Heart left ventricle (tissue), 16 donors: ENCODE measurements at regions of chr21 and their contacts with region 1.

Region 1: GRCh38 chr21:33641336-33642026 is at the start of gene CRYZL1:
- DNase-seq: peak; percentile 100
- ATAC-seq: peak; percentile 89 to 94 (median 92)
- H3K4me3 ChIP-seq: peak within 1 kb of the TSS; percentile 71 to 93 (median 89)
- H3K27ac ChIP-seq: peak within 1 kb of the TSS; percentile 59 to 97 (median 88)
- H3K4me1 ChIP-seq: peaks cover 0 to 41% (median 20%) of the 10 kb centered on the region in 12 donors
- H3K27me3 ChIP-seq: no peaks in the 10 kb centered on the region
- CTCF ChIP-seq: no peak
- POLR2A ChIP-seq: peak in 1 of 2 donors; percentile 60
- total RNA-seq, gene CRYZL1: 15.2 to 33.8 (median 25.3) TPM

Region 2: DNA sequence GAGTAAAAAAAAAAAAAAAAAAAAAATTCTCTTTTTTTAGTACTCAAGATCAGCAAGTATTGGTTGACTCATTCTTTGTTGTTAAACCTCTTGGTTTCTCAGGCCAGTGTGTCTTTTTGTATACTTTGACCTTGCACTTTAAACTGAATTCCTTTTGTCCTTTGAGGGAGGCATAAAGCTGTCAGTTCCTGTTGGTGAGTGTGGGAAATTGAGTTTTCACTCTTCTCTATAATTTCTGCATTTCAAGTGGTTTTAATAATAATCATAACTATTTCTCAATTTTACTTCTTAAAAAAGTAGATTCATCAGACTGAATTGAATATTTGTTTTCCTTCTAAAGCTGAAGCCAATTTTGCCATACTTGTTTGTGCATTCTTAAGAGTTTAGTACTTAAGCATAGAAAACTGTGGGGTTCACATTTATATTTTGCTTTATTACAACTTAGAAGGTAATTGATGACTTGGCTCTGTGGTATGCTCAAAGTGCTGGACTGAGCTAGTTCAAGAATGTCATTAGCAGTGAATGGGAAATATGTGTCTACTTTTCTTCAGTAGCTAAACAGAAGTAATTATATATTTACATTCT is 44.2 kb after region 1 on chr21:
- intact Hi-C with region 1: loop called in 2 of 10 experiments (anchors 5 to 10 kb)
- DNase-seq: no peak
- ATAC-seq: peak in 1 of 4 donors; percentile 42
- H3K4me3 ChIP-seq: no peak overlapping the region
- H3K27ac ChIP-seq: peak overlapping the region in 5 of 12 donors; percentile 6 to 25 (median 19)
- H3K4me1 ChIP-seq: peaks cover 0 to 66% (median 45%) of the 10 kb centered on the region in 12 donors
- H3K27me3 ChIP-seq: no peaks in the 10 kb centered on the region
- CTCF ChIP-seq: no peak
- POLR2A ChIP-seq: no peak

Region 3: GRCh38 chr21:33698087-33698860 is 56.8 kb after region 1 on chr21:
- intact Hi-C with region 1: loop called in 3 of 10 experiments (anchors 5 to 10 kb)
- DNase-seq: no peak
- ATAC-seq: peak; percentile 49 to 83 (median 64)
- H3K4me3 ChIP-seq: no peak overlapping the region
- H3K27ac ChIP-seq: peak overlapping the region in 4 of 12 donors; percentile 9 to 44 (median 22)
- H3K4me1 ChIP-seq: peaks cover 0 to 46% (median 25%) of the 10 kb centered on the region in 12 donors
- H3K27me3 ChIP-seq: no peaks in the 10 kb centered on the region
- CTCF ChIP-seq: no peak
- POLR2A ChIP-seq: no peak

Region 4: DNA sequence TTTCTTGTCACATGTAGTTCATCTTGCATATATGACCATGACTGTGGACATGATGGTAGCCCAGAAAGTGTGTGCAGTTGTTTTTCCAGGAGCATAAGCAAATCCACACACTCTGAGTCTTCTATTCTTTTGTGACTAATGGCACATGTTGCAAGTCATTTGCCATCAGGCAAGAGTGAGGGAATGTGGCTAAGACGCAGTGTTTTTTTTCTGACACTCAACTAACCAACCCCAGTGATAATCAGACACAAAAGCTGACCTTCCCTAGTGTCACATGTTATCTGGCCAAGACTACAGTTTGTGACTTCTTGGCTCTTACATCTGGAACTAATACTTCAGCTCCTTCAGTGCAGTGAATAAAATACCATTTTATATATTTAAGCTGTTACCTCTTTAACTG is 109.6 kb after region 1 on chr21:
- intact Hi-C with region 1: loop called in 8 of 10 experiments (anchors 5 to 10 kb)
- DNase-seq: no peak
- ATAC-seq: peak in 3 of 4 donors; percentile 31 to 50 (median 44)
- H3K4me3 ChIP-seq: no peak overlapping the region
- H3K27ac ChIP-seq: peak overlapping the region in 7 of 12 donors; percentile 1 to 50 (median 17)
- H3K4me1 ChIP-seq: peaks cover 0 to 39% (median 17%) of the 10 kb centered on the region in 12 donors
- H3K27me3 ChIP-seq: no peaks in the 10 kb centered on the region
- CTCF ChIP-seq: no peak
- POLR2A ChIP-seq: no peak

Region 5: DNA sequence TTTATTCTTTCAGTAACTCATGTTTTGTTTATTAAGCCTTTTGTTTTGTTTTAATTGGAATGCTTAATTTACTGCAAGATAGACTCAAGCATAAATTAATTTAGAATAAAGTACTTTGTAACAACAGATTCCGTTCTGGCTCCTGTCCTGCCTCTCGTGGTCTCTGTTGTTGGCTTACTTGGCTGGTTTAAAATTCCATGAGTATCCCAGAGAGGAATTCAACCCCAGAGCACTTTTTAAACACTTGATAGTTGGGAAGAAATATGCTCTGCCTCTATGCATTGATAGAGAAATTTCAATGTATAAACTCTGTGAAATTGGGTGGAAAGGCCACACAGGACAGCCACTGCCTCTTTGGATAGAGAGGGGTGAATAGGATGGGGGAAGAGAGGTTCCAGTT is 184.4 kb after region 1 on chr21:
- intact Hi-C with region 1: loop called in 3 of 10 experiments (anchors 10 kb)
- DNase-seq: no peak
- ATAC-seq: peak in 2 of 4 donors; percentile 16 to 42
- H3K4me3 ChIP-seq: no peak overlapping the region
- H3K27ac ChIP-seq: peak overlapping the region in 2 of 12 donors; percentile 35 to 57
- H3K4me1 ChIP-seq: peaks cover 0 to 45% (median 10%) of the 10 kb centered on the region in 12 donors
- H3K27me3 ChIP-seq: no peaks in the 10 kb centered on the region
- CTCF ChIP-seq: no peak
- POLR2A ChIP-seq: no peak